PC-3 (cell line): ENCODE measurements at regions of chr6 and their contacts with region 1.

Region 1: DNA sequence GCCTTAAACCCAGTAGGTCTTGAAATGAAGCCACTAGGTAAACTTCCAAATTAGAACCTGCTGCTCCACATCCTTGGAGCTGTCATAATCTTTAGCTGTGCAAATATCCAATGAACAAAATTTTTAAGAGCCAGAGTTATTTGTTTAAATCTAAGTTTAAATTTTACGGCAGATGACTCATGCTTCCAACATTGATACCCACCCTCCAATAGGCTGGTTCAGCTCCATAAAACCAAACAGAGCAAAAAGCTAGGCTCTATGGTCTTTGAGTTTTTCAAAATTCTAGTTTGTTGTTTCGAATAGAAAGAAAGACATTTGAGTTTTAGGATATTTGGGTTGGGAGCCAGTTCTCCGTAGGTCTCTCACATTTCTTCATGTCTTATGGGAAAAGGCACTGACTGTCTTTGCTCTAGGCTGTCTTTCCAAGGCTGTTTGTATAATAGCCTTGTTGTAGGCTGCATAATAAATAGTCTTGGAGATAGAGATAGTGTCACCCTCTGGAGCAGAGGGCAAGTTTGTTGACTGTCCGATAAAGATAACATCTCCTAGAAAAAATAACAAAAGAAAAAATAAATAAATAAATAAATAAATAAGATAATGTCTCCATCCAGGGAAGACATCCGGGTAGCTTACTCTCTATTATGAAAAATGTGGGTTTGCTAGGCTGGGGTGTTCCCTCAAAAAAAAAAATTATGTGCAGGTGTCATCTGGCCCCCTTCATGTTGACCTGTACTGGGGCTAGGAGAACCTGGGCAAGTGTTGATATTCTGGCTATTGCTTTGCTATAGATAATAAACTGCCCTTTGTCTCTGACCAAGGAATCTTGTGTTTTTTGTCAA is 36.5 kb downstream of the SLC2A12 start:
- DNase-seq: peak; percentile 88
- ATAC-seq: peak; percentile 62
- H3K4me3 ChIP-seq: peak overlapping the region; percentile 29; the same call in 1 of the 2 replicates
- H3K27ac ChIP-seq: peak overlapping the region; percentile 91
- H3K4me1 ChIP-seq: peaks cover 54% of the 10 kb centered on the region
- H3K27me3 ChIP-seq: no peaks in the 10 kb centered on the region
- CTCF ChIP-seq: no peak

Region 2: DNA sequence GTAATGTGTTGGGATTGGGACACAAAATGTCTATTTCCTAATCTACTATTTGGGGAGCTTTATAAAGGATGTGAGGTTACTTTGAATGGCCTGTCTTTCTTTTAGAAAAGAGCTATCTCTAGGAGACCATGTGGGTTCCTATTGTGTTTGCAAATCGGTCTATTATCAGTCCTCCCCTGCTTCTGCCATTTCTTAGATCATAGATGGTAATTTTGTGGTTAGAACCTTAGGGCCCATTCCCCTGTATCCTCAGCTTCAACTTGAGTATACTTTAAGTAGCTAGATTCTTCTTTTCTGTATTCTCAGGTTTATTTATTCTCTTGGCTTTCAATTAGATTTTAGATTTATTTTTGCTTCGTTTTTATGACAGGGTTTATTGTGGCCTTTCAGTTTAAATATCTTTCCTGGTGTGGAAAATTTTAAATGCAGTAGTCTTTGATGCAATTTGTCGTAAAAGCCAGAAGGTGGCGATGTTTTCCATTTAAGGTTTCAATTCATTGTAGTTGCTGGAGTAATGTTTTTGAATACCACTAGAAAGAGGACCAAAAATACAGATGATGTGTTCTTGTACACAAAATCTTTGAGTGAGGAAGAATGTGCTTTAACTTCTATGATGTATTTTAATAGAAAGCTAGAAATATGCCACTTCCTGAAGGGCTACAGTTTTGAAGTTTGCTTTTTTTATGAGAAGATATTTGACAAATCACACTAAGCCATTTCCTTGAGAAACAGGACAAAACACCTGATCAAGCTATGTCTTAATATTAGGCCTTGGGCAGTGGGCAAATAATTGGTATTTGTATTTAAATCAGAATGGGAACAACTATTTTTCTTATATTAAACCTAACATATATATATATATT is 42.6 kb before region 1 on chr6:
- CTCF ChIA-PET with region 1: no interaction called
- POLR2A ChIA-PET with region 1: no interaction called
- intact Hi-C with region 1: loop called (anchors 5 kb)
- DNase-seq: peak; percentile 68
- ATAC-seq: no peak
- H3K4me3 ChIP-seq: no peak overlapping the region
- H3K27ac ChIP-seq: no peak overlapping the region
- H3K4me1 ChIP-seq: peaks cover 19% of the 10 kb centered on the region
- H3K27me3 ChIP-seq: no peaks in the 10 kb centered on the region
- CTCF ChIP-seq: peak; percentile 80

Region 3: GRCh38 chr6:133995758-133996157 is 20.2 kb before region 1 on chr6:
- CTCF ChIA-PET with region 1: no interaction called
- POLR2A ChIA-PET with region 1: no interaction called
- intact Hi-C with region 1: loop called (anchors 2 kb)
- DNase-seq: no peak
- ATAC-seq: no peak
- H3K4me3 ChIP-seq: no peak overlapping the region
- H3K27ac ChIP-seq: peak overlapping the region; percentile 65
- H3K4me1 ChIP-seq: peaks cover 39% of the 10 kb centered on the region
- H3K27me3 ChIP-seq: no peaks in the 10 kb centered on the region
- CTCF ChIP-seq: no peak

Region 4: DNA sequence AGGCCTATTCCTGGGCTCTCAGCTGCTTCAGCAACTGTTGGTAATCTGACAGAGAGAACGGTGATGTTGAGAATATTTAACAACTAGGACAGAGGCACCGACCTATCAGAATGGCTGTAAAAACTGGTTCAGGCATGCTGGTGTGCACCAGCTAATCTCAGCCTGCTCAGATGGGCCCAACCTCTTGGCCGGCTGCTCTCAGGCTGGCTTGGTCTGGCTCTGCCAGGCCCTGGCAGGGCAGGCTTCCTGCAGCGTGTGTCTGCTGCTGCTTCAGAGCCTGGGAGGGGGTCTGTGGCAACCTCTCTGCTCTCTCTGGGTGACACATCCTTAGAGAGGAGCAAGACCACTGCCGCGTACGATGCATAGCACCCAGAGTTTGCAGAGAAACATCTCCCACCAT is 31.7 kb after region 1 on chr6:
- CTCF ChIA-PET with region 1: no interaction called
- POLR2A ChIA-PET with region 1: no interaction called
- intact Hi-C with region 1: loop called (anchors 5 kb)
- DNase-seq: no peak
- ATAC-seq: no peak
- H3K4me3 ChIP-seq: no peak overlapping the region
- H3K27ac ChIP-seq: no peak overlapping the region
- H3K4me1 ChIP-seq: 0 out of 2 replicates have a peak, but pooled peaks cover 1% of the 10 kb centered on the region
- H3K27me3 ChIP-seq: no peaks in the 10 kb centered on the region
- CTCF ChIP-seq: no peak